Upper lobe of right lung (tissue), 1 donor: ENCODE measurements at regions of chr6 and their contacts with region 1.

Region 1: DNA sequence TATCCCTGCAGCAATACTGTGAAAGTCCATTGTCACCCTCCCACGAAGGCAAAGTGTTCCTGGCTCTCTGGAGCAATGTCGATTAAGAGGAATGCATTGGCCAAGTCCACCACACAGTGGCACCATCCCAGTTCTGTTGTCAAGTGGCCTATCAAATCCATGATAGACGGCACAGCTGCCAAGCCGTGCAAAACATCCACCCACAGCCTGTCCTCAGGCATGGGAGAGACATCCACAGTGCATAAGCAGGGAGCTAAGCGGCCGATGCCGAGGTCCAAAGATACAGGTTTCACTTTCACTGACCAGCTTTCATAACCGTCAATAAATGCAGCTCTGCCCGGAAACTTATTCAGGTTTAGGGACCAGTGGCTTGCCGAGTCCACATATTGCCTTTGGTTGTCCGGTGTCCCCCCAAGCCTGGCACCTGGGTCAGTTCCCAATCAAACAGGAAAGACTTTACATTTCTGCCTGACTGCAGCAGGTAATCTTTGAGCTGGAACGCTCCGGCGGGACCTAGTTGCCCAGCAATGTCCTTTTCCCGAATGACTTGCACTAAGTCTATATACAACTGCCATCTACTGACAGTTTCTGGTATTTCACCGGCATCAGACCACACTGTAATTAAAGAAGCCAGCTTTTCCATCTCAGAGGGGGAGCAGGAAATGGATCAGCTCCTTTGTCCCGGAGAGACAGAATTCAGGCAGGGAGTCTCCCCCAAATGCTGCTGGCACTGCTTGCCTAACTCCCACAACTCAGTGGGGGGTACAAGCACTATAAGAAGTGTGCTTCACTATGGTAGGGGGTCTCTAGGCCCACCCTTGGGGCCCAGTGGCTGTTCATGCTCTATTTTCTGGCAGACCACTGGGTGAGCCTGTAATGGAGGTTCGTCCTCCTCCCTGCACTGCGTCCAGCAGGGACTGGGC is 6.3 kb downstream of the ZKSCAN3 start:
- DNase-seq: peak; percentile 84
- ATAC-seq: peak; percentile 91
- H3K4me3 ChIP-seq: peak overlapping the region; percentile 69
- H3K27ac ChIP-seq: peak overlapping the region; percentile 88
- H3K4me1 ChIP-seq: peaks cover 28% of the 10 kb centered on the region
- H3K27me3 ChIP-seq: no peaks in the 10 kb centered on the region
- CTCF ChIP-seq: peak; percentile 83

Region 2: GRCh38 chr6:28136585-28137504 is 219.2 kb before region 1 on chr6:
- intact Hi-C with region 1: loop called (anchors 10 kb)
- DNase-seq: peak; percentile 91
- ATAC-seq: peak; percentile 90
- H3K4me3 ChIP-seq: peak overlapping the region; percentile 80
- H3K27ac ChIP-seq: peak overlapping the region; percentile 94
- H3K4me1 ChIP-seq: peaks cover 17% of the 10 kb centered on the region
- H3K27me3 ChIP-seq: no peaks in the 10 kb centered on the region
- CTCF ChIP-seq: no peak

Region 3: GRCh38 chr6:28252009-28252975 is 103.7 kb before region 1 on chr6 and contains the start of gene ZKSCAN4:
- intact Hi-C with region 1: loop called (anchors 10 kb)
- DNase-seq: peak; percentile 74
- ATAC-seq: peak; percentile 99
- H3K4me3 ChIP-seq: peak within 1 kb of the TSS; percentile 95
- H3K27ac ChIP-seq: peak within 1 kb of the TSS; percentile 52
- H3K4me1 ChIP-seq: peaks cover 21% of the 10 kb centered on the region
- H3K27me3 ChIP-seq: no peaks in the 10 kb centered on the region
- CTCF ChIP-seq: no peak
- total RNA-seq, gene ZKSCAN4: 4.5 TPM

Region 4: GRCh38 chr6:28673417-28673799 is 317.4 kb after region 1 on chr6:
- intact Hi-C with region 1: no loop called
- DNase-seq: no peak
- ATAC-seq: no peak
- H3K4me3 ChIP-seq: no peak overlapping the region
- H3K27ac ChIP-seq: no peak overlapping the region
- H3K4me1 ChIP-seq: peaks cover 7% of the 10 kb centered on the region
- H3K27me3 ChIP-seq: peaks cover 53% of the 10 kb centered on the region
- CTCF ChIP-seq: no peak